ENCODE measurements at regions of chr4 and their contacts with region 1.

Region 1: GRCh38 chr4:152485726-152486276 is 50.1 kb downstream of the FBXW7 start:
- DNase-seq: peak in 5 of 14 experiments; percentile 0 to 74 (median 59)
- ATAC-seq: peak; percentile 98
- H3K4me3 ChIP-seq: no peak overlapping the region
- H3K4me3 Mint-ChIP-seq: no peak overlapping the region
- H3K27ac ChIP-seq: no peak overlapping the region
- H3K27ac Mint-ChIP-seq: peak overlapping the region; percentile 15
- H3K4me1 ChIP-seq: no peaks in the 10 kb centered on the region
- H3K4me1 Mint-ChIP-seq: peaks cover 57% of the 10 kb centered on the region
- H3K27me3 ChIP-seq: no peaks in the 10 kb centered on the region
- H3K27me3 Mint-ChIP-seq: no peaks in the 10 kb centered on the region
- CTCF ChIP-seq: no peak

Region 2: GRCh38 chr4:152594978-152595925 is 109.5 kb after region 1 on chr4:
- CTCF ChIA-PET with region 1: no interaction called
- POLR2A ChIA-PET with region 1: no interaction called
- intact Hi-C with region 1: loop called in 1 of 2 experiments (anchors 1 kb)
- DNase-seq: no peak
- ATAC-seq: no peak
- H3K4me3 ChIP-seq: no peak overlapping the region
- H3K4me3 Mint-ChIP-seq: no peak overlapping the region
- H3K27ac ChIP-seq: no peak overlapping the region
- H3K27ac Mint-ChIP-seq: no peak overlapping the region
- H3K4me1 ChIP-seq: no peaks in the 10 kb centered on the region
- H3K4me1 Mint-ChIP-seq: peaks cover 8% of the 10 kb centered on the region
- H3K27me3 ChIP-seq: no peaks in the 10 kb centered on the region
- H3K27me3 Mint-ChIP-seq: peaks cover 12% of the 10 kb centered on the region
- CTCF ChIP-seq: no peak

Measured in CD4-positive, alpha-beta T cell (primary cell).